Aorta (tissue), 5 donors: ENCODE measurements at regions of chr5 and their contacts with region 1.

Region 1: GRCh38 chr5:129904102-129904666 is at the start of gene CHSY3:
- DNase-seq: peak; percentile 93 to 96
- ATAC-seq: peak; percentile 95
- H3K4me3 ChIP-seq: peak within 1 kb of the TSS; percentile 84 to 95
- H3K27ac ChIP-seq: peak within 1 kb of the TSS; percentile 86
- H3K4me1 ChIP-seq: no peaks in the 10 kb centered on the region
- H3K27me3 ChIP-seq: no peaks in the 10 kb centered on the region
- total RNA-seq, gene CHSY3: 19.5 to 32.5 TPM

Region 2: DNA sequence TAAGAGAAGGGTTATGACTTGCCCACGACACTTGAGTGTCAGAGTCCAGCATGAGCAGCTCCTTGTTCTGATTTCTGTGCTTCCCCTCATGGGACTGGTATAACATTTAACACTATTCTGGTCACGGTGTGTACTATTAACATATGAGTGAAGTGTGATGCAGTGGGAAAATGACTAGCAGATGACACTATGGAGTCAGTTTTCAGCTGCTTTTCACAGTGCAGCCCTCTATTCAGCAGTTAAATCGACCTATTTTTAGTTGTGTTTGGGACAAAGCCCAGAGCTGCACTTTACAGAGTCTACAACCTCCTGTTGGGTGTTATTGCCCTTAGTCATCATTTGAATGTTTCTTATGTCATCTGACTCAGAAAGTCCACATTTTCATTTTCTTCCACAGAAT is 59.2 kb after region 1 on chr5:
- intact Hi-C with region 1: loop called in 1 of 2 experiments (anchors 5 kb)
- DNase-seq: no peak
- ATAC-seq: peak; percentile 82
- H3K4me3 ChIP-seq: no peak overlapping the region
- H3K27ac ChIP-seq: peak overlapping the region in 1 of 2 donors; percentile 47
- H3K4me1 ChIP-seq: peaks cover 2 to 10% of the 10 kb centered on the region in 2 donors
- H3K27me3 ChIP-seq: no peaks in the 10 kb centered on the region

Region 3: GRCh38 chr5:130017173-130017572 is 113.0 kb after region 1 on chr5:
- intact Hi-C with region 1: no loop called
- DNase-seq: no peak
- ATAC-seq: no peak
- H3K4me3 ChIP-seq: no peak overlapping the region
- H3K27ac ChIP-seq: peak overlapping the region in 1 of 2 donors; percentile 51
- H3K4me1 ChIP-seq: peaks cover 0 to 4% of the 10 kb centered on the region in 2 donors
- H3K27me3 ChIP-seq: no peaks in the 10 kb centered on the region

Region 4: DNA sequence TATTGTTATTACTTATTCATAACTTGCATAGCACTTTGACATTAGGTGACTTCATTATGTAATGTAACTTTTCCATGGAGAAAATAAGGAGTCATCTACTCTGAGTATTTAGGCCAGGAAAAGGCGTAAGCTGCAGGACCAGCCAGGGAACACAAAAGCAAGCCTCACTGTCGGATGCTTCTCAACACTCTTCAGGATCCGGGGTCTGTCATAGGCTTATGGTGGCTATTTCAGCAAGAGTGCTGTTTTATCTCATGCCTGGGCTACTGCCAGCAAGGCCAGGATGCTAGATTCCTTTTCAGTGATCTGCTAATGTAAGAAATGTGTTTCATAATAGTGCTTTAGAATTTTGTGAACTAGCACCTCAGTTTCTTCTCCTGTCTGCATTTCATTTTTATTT is 162.5 kb after region 1 on chr5:
- intact Hi-C with region 1: loop called in 1 of 2 experiments (anchors 10 kb)
- DNase-seq: peak in 1 of 2 donors; percentile 64
- ATAC-seq: peak; percentile 58
- H3K4me3 ChIP-seq: no peak overlapping the region
- H3K27ac ChIP-seq: peak overlapping the region in 1 of 2 donors; percentile 16
- H3K4me1 ChIP-seq: peaks cover 1 to 3% of the 10 kb centered on the region in 2 donors
- H3K27me3 ChIP-seq: no peaks in the 10 kb centered on the region

Region 5: DNA sequence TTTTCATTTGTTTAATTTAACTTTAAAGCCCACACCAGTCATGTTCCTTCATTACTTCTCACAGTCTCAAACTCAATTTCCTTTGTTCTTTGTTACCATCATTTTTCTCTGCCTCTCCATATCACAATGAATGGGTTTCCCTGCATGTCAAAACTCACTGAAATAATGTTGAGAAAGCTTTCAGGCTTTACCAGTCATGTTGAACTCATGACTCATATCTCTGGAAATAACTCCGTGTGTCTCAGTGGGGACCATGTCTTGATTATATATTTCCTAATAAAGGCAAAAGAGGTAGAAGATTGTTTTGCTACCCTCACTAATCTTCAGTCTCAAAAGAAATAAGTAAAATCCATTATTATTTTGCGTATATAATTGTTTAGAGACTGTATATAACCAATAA is 231.3 kb after region 1 on chr5:
- intact Hi-C with region 1: loop called (anchors 5 kb)
- DNase-seq: no peak
- ATAC-seq: peak; percentile 69
- H3K4me3 ChIP-seq: no peak overlapping the region
- H3K27ac ChIP-seq: no peak overlapping the region
- H3K4me1 ChIP-seq: peaks cover 0 to 6% of the 10 kb centered on the region in 2 donors
- H3K27me3 ChIP-seq: no peaks in the 10 kb centered on the region

Region 6: GRCh38 chr5:130541617-130542221 is 637.5 kb after region 1 on chr5:
- intact Hi-C with region 1: loop called in 1 of 2 experiments (anchors 10 kb)
- DNase-seq: no peak
- ATAC-seq: no peak
- H3K4me3 ChIP-seq: no peak overlapping the region
- H3K27ac ChIP-seq: no peak overlapping the region
- H3K4me1 ChIP-seq: peaks cover 2 to 7% of the 10 kb centered on the region in 2 donors
- H3K27me3 ChIP-seq: no peaks in the 10 kb centered on the region

Region 7: DNA sequence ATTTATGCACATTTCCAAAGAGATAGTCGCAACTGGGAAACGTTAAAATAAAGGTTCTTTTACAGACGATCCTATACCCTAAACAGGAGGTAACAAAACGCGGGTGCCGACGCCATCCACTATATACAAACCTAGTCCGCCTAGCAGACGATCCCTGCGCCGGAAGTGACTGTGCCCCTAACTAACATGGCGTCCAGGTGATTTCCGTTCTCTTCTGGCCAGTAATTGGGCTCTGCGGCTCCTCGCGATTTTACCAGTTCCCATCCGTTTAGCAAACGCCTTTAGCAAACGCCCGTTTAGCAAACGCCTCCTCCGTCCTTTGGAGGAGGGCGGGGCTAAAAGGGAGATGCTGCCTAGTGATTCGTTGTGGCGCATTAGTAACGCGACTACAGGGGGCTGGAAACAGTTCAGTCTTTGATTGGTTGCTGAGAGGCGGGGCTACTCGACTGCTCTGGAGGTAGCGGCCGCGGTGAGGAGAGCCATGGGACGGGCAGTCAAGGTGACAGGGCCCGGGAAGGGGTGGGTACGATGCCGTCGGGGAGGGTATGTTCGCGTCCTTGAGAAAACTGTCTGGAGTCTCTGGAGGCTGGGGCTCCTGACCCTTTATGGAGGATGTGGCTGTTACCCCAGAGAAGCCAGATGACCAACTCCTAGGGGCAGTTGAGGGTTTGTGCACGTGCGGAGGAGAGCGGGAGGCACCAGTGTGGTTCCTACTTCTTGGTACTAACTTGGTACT is 1266.5 kb after region 1 on chr5 and contains the start of gene LYRM7:
- intact Hi-C with region 1: loop called in 1 of 2 experiments (anchors 5 kb)
- DNase-seq: peak; percentile 94 to 98
- ATAC-seq: peak; percentile 98
- H3K4me3 ChIP-seq: peak within 1 kb of the TSS; percentile 70 to 87
- H3K27ac ChIP-seq: no peak within 1 kb of the TSS
- H3K4me1 ChIP-seq: peaks cover 2 to 5% of the 10 kb centered on the region in 2 donors
- H3K27me3 ChIP-seq: no peaks in the 10 kb centered on the region
- total RNA-seq, gene LYRM7: 7.1 to 12.0 TPM